Right ventricle myocardium inferior (tissue), 1 donor: ENCODE measurements at regions of chr13 and their contacts with region 1.

Region 1: DNA sequence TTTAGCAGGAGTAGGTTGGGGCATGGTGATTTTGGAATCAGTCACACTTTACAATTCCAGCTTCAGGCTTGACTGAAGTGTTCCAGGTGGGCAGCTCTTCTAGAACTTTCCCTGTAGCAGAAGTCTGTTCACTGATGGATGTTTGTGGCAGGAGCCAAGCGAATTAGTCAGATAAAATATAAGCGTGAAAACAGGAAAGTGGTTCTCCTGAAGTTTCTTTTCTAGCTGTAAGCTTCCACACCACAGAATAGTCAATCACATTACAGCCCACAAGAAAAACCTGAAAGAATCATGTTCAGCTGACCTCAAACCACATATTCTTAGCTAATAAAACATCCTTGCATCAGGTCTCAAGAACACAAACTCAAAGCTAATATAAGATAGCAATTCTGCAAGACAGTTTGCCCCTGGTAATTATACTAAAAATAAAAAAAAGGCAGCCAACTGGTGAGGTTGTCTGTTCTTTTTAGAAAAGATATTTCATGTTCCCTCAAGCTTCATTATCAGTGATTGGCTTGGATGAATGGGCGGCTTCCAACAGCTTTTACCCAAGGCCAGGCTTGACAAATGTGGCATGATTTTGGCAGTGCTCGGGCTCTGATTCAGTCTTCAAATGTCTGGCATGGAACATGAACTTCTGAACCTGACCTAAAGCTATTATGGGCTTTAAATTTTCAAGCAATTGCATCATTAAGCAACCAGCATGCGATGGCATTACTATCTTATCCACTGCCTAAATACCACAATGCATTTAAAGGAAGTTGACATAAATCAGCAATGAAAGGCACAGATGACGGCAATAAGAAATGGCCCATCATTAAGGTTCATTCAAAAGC is 136.8 kb downstream of the DCLK1 start:
- DNase-seq: peak; percentile 67
- ATAC-seq: peak; percentile 86

Region 2: DNA sequence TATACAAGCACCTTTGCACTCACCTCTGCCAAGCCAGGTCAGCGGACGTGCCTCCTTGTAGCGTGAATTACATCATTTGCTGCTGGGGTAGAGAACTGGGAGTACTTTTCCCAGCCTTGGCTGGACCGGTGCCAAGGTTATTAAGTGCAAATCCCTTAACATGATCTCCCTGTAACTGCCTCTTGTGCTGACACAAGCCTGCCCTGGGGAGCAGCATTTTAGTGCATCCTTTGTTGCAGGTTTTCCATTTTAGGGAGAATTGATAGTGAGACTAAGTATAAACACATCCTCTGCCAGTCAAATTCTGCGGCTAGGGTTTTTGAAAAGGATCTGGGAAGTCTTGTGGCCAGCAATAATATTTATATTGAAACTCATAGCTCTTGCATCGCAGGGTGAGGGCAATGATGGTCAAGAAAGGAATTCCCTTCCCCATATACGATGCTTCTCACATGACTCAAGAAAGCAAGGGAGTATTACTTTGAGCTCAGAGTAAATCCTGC is 169.5 kb after region 1 on chr13:
- intact Hi-C with region 1: loop called (anchors 10 kb)
- DNase-seq: peak; percentile 83
- ATAC-seq: peak; percentile 85

Region 3: GRCh38 chr13:36207672-36208071 is 213.3 kb after region 1 on chr13:
- intact Hi-C with region 1: no loop called
- DNase-seq: no peak
- ATAC-seq: no peak